ENCODE measurements at regions of chr5 and their contacts with region 1.

Region 1: DNA sequence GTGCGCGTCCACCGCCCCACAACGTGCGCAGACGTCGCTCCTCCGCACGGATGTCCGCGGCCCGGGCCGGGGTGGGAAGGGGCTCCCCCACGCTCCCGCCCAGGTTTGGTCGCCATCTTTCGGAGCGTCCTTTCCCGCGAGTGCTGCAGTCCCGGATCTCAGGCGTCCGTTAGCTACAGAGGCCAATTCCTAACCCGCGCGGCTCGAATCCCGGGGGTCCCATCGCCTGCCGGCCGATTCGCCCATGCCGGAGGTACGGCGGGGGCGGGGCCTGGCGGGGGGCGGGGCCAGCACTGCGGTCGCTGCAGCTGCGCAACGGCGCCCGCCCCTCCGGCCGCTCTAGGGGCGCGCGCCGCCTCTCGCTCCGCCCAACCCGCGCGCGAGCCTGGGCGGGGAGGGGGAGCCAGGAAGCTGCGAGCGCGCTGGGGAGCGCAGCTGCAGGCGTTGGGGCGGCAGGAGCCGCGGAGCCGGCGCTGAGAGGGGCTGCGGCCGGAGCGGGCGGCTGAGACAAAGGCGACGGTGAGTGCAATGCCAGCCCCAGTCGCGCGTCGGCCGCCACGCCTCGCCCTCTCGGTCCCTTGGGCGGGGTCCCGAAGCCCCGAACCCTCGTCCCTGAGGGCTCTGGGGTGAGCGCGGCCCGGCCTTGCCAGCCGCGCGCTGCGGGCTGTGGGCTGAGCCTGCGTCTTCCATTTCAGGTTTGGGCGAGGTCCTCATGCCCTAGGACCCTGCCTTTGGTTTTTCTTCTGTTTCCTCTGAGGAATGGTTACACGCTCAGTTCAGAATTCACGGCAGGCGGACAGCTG is at the start of gene CDC42SE2:
- DNase-seq: peak; percentile 95
- H3K4me3 ChIP-seq: peak within 1 kb of the TSS; percentile 83
- H3K27ac ChIP-seq: peak within 1 kb of the TSS; percentile 85
- H3K4me1 ChIP-seq: peaks cover 49% of the 10 kb centered on the region
- CTCF ChIP-seq: no peak
- total RNA-seq, gene CDC42SE2: 34.7 and 54.2 TPM in 2 replicates

Region 2: DNA sequence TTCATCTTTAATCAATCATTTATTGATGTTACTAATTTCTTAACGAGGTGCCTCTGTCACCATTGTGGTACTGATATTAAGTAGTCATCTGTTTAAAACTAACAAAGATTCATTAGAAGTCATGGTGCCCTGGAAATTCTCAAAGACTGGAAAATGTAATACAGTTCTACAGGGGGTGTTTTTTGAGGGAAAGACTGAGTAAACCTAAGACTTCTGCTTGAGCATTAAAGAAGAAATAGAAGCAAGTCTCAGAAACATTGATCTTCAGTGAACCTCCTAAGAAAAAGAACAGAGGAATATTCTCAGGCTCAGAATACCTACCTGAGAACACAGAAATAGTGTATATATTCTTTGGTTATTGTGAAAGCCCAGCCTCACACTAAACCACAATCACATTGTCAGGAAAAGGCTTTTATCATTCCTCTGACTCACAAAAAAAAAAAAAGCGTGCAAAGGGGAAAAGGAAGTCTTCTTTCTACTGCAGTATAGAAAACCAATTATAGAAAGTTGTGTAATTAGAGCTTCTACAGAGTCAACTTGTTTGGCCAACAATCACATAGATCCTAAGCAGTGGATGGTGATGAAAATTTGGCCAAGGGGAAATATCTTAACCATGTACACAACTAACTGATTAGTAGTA is 159.6 kb before region 1 on chr5:
- CTCF ChIA-PET with region 1: no interaction called
- POLR2A ChIA-PET with region 1: no interaction called
- intact Hi-C with region 1: no loop called
- DNase-seq: no peak
- H3K4me3 ChIP-seq: no peak overlapping the region
- H3K27ac ChIP-seq: no peak overlapping the region
- H3K4me1 ChIP-seq: no peaks in the 10 kb centered on the region
- CTCF ChIP-seq: no peak

Region 3: DNA sequence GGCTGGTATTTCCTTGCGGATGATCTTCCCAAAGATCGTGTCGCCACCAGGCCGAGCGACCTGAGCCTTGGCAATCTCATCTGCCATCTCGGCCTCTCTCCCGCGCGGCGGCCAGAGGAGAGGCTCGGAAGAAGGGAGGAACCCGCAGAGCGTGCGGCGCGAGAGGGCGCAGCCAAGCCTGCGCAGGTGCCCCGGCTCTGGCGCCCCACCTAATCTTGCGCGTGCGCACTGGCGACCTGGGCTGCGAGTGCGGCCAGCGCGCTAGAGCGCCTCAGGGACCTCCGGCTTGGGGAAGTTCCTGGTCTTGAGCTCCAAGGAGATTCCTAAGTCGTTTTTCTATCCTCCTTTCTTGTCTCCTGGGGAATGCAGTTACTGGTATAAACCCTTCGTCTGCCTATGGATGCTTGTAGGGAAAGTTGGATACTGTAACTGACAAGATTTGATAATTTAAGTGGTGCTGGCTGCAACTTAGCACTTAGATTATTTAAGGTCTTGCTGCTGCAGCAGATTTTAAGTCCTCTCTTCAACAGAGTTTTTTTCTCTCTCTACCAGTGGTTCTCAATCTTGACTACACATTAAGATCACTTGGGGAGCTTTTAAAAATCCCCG is 98.6 kb before region 1 on chr5 and contains the start of gene HINT1:
- CTCF ChIA-PET with region 1: interaction called, 5 read pairs
- POLR2A ChIA-PET with region 1: interaction called, 12 read pairs
- intact Hi-C with region 1: loop called (anchors 1 kb)
- DNase-seq: peak; percentile 97
- H3K4me3 ChIP-seq: peak within 1 kb of the TSS; percentile 74
- H3K27ac ChIP-seq: peak within 1 kb of the TSS; percentile 75
- H3K4me1 ChIP-seq: peaks cover 28% of the 10 kb centered on the region
- CTCF ChIP-seq: peak; percentile 29; the same call in 1 of the 2 replicates
- total RNA-seq, gene HINT1: 205 and 343 TPM in 2 replicates

Region 4: GRCh38 chr5:131252824-131253171 is 11.1 kb before region 1 on chr5:
- CTCF ChIA-PET with region 1: interaction called, 6 read pairs
- POLR2A ChIA-PET with region 1: interaction called, 91 read pairs
- intact Hi-C with region 1: no loop called
- DNase-seq: peak; percentile 91
- H3K4me3 ChIP-seq: peak overlapping the region; percentile 67
- H3K27ac ChIP-seq: peak overlapping the region; percentile 80
- H3K4me1 ChIP-seq: peaks cover 60% of the 10 kb centered on the region
- CTCF ChIP-seq: no peak

Region 5: DNA sequence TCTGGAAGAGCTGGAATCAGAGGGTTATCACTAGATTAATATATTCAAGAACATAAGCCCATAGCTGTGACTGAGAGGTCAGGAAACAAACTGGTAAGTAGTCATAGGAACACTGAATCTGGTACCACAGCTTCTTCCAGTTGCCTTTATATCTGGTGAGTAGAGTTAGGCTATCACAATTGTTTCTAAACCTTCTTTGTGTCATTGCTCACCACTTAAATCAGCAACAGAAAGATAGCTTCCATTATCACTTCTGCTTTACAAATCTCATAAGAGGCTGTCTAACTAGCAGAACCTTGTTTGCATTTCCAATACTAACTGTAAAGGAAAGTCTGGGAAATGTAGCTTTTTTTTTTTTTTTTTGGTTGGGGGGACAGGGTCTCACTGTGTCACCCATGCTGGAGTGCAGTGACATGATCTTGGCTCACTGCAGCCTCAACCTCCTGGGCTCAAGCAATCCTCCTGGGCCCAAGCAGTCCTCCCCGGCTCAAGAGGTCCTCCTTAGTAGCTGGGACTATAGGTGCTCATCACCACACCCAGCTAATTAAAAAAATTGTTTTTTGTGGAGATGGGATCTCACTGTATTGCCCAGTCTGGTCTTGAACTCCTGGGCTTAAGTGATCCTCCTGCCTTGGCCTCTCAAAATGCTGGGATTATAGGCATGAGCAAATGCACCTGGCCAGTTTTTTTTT is 22.0 kb after region 1 on chr5:
- CTCF ChIA-PET with region 1: interaction called, 6 read pairs
- POLR2A ChIA-PET with region 1: interaction called, 10 read pairs
- intact Hi-C with region 1: no loop called
- DNase-seq: no peak
- H3K4me3 ChIP-seq: no peak overlapping the region
- H3K27ac ChIP-seq: no peak overlapping the region
- H3K4me1 ChIP-seq: peaks cover 33% of the 10 kb centered on the region
- CTCF ChIP-seq: no peak

Region 6: GRCh38 chr5:131382407-131383395 is 118.9 kb after region 1 on chr5:
- CTCF ChIA-PET with region 1: interaction called, 10 read pairs
- POLR2A ChIA-PET with region 1: interaction called, 18 read pairs
- intact Hi-C with region 1: loop called (anchors 1 kb)
- DNase-seq: peak; percentile 87
- H3K4me3 ChIP-seq: no peak overlapping the region
- H3K27ac ChIP-seq: peak overlapping the region; percentile 87
- H3K4me1 ChIP-seq: peaks cover 60% of the 10 kb centered on the region
- CTCF ChIP-seq: peak; percentile 87